Mammary epithelial cell (primary cell): ENCODE measurements at regions of chr1 and their contacts with region 1.

Region 1: DNA sequence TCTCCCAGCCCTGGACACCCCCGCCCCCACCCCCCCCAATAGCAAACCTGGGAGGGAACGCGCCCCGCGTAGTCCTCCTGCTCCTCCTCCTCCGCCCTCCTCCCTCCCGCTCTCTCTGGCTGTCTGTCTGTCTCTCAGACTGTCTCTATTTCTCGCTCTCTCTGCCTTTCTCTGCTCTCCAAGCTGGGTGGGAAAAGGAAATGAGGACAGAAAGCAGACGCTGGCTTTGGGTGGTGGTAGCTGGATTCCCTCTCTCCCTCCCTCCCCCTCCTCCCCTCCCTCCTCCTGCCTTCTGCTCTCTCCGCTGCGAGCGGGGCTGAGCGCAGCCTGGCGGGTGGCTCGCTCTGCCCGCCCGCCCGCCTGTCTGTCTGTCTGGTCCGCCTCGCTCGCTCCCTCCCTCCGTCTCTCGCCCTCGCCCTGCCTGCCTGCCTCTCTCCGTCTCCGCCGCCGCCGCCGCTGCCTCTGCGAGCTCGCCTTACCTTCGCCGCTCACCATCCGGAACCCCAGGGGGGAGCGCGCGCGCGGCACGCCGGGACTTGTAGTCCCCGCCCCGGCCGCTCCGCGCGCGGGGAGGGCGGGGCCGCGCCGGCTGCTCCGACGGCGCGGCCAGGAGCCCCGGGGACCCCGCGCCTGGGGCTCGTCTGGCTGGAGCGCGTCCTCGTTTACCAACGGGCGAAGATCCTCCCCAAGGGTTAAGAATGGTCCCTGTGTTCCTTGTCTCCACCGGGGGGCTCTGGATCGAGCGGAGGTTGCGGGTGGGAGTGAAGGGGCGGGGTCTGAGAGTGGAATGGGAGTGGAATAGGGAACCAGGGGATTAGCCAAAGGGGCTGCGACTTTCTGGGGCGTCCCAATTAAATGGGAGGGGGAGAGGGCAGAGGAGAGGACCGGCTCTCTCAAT is at the start of gene AHDC1:
- DNase-seq: peak; percentile 89
- H3K4me3 ChIP-seq: peak within 1 kb of the TSS; percentile 77 to 93 (median 78)
- H3K27ac ChIP-seq: peak within 1 kb of the TSS; percentile 33
- H3K4me1 ChIP-seq: peaks cover 44% of the 10 kb centered on the region
- H3K27me3 ChIP-seq: no peaks in the 10 kb centered on the region
- CTCF ChIP-seq: peak in 1 of 2 donors; percentile 14
- total RNA-seq, gene AHDC1: 35.3 to 51.8 TPM

Region 2: DNA sequence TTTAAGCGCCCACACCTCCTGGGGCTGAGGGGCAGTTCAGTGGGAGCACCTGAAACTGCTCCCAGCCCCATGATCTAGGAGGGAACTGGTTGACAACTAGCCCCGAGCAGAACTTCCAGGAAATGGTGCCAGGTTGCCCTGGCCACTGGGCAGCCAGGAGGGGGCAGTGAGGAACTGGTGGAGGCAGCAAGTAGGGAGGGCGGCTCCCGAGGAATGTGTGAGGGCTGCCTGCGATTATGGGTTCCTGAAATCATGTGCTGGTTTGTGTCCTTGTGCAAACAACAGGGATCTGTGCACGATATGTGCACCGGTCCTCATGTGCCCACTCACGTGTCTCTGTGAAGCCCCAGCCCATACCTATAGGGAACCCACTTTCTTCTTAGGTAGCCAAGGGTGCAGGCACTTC is 201.6 kb before region 1 on chr1:
- CTCF ChIA-PET with region 1: interaction called, 4 read pairs
- dilution Hi-C with region 1: loop called (anchors 5 kb)
- in situ Hi-C with region 1: loop called (anchors 5 to 10 kb)
- intact Hi-C with region 1: loop called (anchors 1 kb)
- DNase-seq: peak; percentile 54
- H3K4me3 ChIP-seq: no peak overlapping the region
- H3K27ac ChIP-seq: no peak overlapping the region
- H3K4me1 ChIP-seq: peaks cover 30% of the 10 kb centered on the region
- H3K27me3 ChIP-seq: no peaks in the 10 kb centered on the region
- CTCF ChIP-seq: peak; percentile 65 to 76

Region 3: DNA sequence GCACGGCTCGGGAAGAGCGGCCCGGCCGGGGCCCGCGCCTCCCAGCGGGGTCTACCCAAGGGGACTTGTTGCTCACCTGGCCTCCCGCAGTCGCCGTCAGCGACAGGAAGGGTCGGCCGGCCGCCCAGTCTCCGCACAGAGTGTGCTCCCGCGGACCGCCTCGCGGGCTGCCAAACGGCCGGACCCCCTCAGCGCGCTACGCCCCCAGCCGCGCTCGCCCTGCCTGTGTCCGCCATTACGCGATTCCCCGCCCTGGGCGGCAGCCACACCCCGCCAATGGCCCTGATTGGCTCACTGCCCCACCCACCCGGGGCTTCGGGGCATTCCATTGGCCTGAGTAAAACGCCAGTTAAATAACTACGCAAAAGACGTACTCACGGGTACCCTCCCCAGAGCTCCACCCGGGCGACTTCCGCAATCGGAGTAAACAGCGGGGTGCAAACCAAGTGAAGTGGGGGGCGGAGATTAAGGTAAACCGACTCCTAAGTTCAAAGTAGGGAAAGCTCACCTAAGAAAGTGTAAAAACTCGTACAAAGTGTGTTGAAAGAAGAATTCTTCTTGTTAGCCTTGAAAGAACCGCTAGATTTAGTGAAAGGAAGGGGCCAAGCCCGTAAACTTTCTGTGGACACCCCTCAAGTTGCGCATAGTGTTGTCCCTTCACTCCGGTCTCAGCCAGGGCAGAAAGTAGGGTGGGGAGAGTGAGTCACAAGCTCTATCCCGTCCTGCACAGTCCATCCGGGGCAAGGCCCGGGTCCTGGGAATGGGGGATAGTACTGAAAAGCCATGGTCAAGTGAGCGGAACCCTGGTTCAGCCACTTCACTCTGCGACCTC is 113.8 kb before region 1 on chr1 and contains the start of gene WASF2:
- CTCF ChIA-PET with region 1: interaction called, 6 read pairs
- dilution Hi-C with region 1: no loop called
- in situ Hi-C with region 1: no loop called
- intact Hi-C with region 1: loop called (anchors 5 kb)
- DNase-seq: peak; percentile 95
- H3K4me3 ChIP-seq: peak within 1 kb of the TSS; percentile 63 to 94 (median 94)
- H3K27ac ChIP-seq: peak within 1 kb of the TSS; percentile 97
- H3K4me1 ChIP-seq: peaks cover 18% of the 10 kb centered on the region
- H3K27me3 ChIP-seq: no peaks in the 10 kb centered on the region
- CTCF ChIP-seq: no peak
- total RNA-seq, gene WASF2: 32.2 to 138 TPM

Region 4: DNA sequence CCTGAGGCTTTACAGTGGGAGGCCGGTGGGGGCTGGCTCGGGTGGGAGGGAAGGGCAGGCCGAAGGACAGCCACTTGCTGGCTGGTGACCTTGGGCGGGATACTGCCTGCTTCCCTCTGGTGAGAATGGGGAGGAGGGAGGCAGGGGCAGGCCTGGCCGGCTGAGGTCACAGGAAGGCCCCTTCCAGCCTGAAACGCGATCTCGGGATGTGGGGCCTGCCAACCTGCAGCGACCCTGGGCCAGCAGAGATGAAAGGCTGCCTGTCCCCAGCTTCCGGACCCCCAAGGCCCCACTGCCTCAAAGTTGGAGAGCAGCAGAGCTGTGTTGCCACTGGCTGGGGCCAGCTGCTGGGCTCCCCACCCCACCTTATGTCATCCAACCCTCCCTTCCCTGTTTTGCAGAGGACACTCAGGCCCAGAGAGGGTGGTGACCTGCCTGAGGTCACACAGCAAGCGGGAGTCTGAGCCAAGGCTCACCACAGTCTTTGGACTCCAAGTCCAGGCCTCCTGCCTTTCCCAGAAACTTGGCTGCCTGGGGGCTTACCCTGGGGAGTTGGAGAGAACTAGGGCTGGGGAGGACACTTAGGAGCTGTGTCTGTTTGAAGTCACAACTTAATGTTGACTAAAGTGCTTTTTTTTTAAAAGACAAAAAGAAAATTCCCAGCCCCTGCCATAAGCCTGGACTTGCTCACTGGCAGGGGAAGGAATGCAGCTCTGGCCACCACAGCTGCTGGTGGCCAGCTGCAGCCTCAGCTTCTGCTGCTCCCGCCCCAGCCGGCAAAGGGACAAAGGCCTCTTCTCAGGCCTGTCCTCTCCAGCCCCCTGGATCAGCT is 99.1 kb before region 1 on chr1:
- CTCF ChIA-PET with region 1: no interaction called
- dilution Hi-C with region 1: no loop called
- in situ Hi-C with region 1: no loop called
- intact Hi-C with region 1: loop called (anchors 5 kb)
- DNase-seq: peak; percentile 76
- H3K4me3 ChIP-seq: no peak overlapping the region
- H3K27ac ChIP-seq: peak overlapping the region; percentile 81
- H3K4me1 ChIP-seq: peaks cover 28% of the 10 kb centered on the region
- H3K27me3 ChIP-seq: no peaks in the 10 kb centered on the region
- CTCF ChIP-seq: no peak

Region 5: DNA sequence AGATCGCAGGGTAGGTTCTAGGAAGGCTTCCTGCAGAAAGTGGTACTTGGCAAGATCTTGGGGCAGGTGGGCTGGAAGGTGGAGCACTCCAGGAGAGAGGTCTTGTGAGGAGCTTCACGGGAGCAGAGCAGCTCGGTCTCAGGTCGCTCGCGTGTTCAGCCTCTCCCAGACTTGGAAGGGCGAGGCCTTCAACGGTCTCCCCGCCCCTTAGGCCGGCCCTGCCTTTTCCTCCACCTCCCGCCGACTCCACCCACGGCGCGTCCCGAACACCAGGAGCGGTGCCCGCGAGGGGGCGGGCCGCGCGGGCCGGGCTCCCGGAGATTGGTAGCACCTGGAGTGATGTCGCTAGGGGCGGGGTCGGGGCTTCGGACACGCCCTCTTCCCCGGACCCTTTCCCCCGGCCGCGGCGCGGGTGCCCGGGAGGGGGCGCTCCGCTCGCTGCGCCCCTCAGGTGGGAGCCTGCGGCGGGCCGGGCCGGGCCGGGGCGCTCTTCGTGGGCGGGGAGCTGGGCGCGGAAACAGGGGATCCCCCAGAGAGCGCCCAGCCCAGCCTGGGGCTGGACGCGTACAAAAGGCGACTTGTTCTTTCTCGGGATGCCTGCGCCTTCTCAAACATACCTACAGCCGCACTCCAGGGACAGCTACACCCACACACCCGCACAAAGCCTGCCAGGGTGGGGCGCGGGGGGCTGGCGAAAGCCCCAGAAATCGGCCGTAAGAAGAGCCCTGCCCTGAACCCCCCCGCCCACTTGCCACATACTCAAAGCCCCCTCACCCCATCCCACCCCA is 35.4 kb before region 1 on chr1:
- CTCF ChIA-PET with region 1: interaction called, 3 read pairs
- dilution Hi-C with region 1: no loop called
- in situ Hi-C with region 1: loop called in 1 of 2 experiments (anchors 5 kb)
- intact Hi-C with region 1: loop called (anchors 2 kb)
- DNase-seq: peak; percentile 97
- H3K4me3 ChIP-seq: peak overlapping the region in 1 of 3 experiments; percentile 30
- H3K27ac ChIP-seq: peak overlapping the region; percentile 71
- H3K4me1 ChIP-seq: peaks cover 79% of the 10 kb centered on the region
- H3K27me3 ChIP-seq: no peaks in the 10 kb centered on the region
- CTCF ChIP-seq: peak; percentile 15 to 56

Region 6: DNA sequence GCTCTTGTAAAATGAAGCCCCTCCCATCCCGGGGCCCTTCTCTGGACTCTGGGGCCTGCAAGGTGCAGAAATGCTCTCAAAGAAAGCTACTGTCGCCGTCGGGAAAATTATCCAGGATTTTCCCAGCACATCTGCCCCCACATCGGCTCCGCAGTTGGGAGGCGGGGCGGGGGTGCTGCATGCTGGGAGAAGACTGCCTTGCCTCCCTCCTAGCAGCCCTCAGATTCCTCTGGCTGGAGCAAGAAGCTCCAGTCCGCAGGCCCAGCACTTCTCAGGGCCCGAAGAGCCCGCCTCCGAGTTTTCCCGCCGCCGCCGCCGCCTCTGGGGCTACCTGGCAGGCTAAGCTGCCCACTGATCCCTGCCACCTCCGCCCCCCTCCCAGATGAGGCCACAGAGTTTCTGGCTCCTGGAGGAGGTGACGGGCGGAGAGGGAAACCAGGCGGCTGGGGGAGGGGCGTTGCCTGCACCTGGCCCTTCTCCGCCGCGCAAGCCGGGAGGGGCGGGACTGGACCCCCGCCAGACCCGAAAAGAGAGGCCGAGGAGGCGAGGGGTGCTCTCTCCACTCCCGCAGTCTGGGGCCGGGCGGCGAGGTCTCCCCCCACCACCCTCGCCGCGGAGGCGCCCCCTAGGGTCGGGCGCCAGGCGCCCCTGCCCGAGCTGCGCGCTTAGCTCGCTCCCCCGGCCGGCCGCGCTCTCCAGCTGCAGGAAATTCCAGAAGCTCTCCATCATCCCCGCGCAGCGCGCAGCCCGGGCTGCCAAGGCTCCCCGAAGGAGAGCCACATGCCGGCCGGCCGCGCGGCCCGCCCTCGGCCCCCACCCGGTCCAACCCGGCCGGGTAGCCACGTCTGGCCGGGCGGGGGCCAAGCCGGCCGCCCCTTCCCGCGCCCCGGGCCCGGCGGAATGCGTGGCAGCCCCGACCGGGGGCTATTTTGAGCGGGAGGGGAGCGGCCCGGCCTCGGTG is 28.8 kb before region 1 on chr1:
- CTCF ChIA-PET with region 1: interaction called, 3 read pairs
- dilution Hi-C with region 1: no loop called
- in situ Hi-C with region 1: no loop called
- intact Hi-C with region 1: loop called (anchors 1 kb)
- DNase-seq: peak; percentile 68
- H3K4me3 ChIP-seq: peak overlapping the region in 2 of 3 experiments; percentile 10 to 18
- H3K27ac ChIP-seq: peak overlapping the region; percentile 20
- H3K4me1 ChIP-seq: peaks cover 70% of the 10 kb centered on the region
- H3K27me3 ChIP-seq: no peaks in the 10 kb centered on the region
- CTCF ChIP-seq: no peak

Region 7: GRCh38 chr1:27624467-27625178 is 20.7 kb after region 1 on chr1:
- CTCF ChIA-PET with region 1: no interaction called
- dilution Hi-C with region 1: no loop called
- in situ Hi-C with region 1: no loop called
- intact Hi-C with region 1: no loop called
- DNase-seq: no peak
- H3K4me3 ChIP-seq: no peak overlapping the region
- H3K27ac ChIP-seq: peak overlapping the region; percentile 23
- H3K4me1 ChIP-seq: peaks cover 17% of the 10 kb centered on the region
- H3K27me3 ChIP-seq: no peaks in the 10 kb centered on the region
- CTCF ChIP-seq: no peak

Region 8: GRCh38 chr1:27662707-27663393 is 58.9 kb after region 1 on chr1:
- CTCF ChIA-PET with region 1: interaction called, 3 read pairs
- dilution Hi-C with region 1: no loop called
- in situ Hi-C with region 1: loop called in 1 of 2 experiments (anchors 5 kb)
- intact Hi-C with region 1: loop called (anchors 1 kb)
- DNase-seq: peak; percentile 62
- H3K4me3 ChIP-seq: no peak overlapping the region
- H3K27ac ChIP-seq: no peak overlapping the region
- H3K4me1 ChIP-seq: peaks cover 14% of the 10 kb centered on the region
- H3K27me3 ChIP-seq: no peaks in the 10 kb centered on the region
- CTCF ChIP-seq: peak; percentile 81

Region 9: GRCh38 chr1:27724961-27725373 is 121.0 kb after region 1 on chr1:
- CTCF ChIA-PET with region 1: no interaction called
- dilution Hi-C with region 1: no loop called
- in situ Hi-C with region 1: no loop called
- intact Hi-C with region 1: no loop called
- DNase-seq: peak; percentile 8
- H3K4me3 ChIP-seq: peak overlapping the region; percentile 22 to 38 (median 35)
- H3K27ac ChIP-seq: peak overlapping the region; percentile 79
- H3K4me1 ChIP-seq: peaks cover 19% of the 10 kb centered on the region
- H3K27me3 ChIP-seq: no peaks in the 10 kb centered on the region
- CTCF ChIP-seq: no peak

Region 10: DNA sequence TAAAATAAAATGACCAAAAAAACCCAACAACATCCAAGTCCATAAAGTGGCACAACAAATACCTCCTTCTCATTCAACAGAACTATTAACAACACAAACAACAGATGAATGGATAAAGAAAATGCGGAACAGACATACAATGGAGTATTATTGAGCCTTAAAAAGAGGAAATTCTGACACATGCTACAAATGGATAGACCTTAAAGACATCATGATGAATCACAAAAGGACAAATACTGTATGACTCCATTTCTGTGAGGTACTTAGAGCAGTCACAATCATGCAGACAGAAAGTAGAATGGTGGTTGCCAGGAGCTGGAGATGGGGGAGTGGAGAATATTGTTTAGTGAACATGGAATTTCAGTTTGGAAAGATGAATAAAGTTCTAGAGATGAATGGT is 441.8 kb after region 1 on chr1:
- CTCF ChIA-PET with region 1: no interaction called
- dilution Hi-C with region 1: no loop called
- in situ Hi-C with region 1: no loop called
- intact Hi-C with region 1: no loop called
- DNase-seq: peak; percentile 20
- H3K4me3 ChIP-seq: no peak overlapping the region
- H3K27ac ChIP-seq: no peak overlapping the region
- H3K4me1 ChIP-seq: no peaks in the 10 kb centered on the region
- H3K27me3 ChIP-seq: no peaks in the 10 kb centered on the region
- CTCF ChIP-seq: no peak